Cardiac septum (tissue), 1 donor: ENCODE measurements at regions of chr11 and their contacts with region 1.

Region 1: GRCh38 chr11:57800444-57801182 is 39.0 kb downstream of the CTNND1 start:
- DNase-seq: no peak

Region 2: GRCh38 chr11:57761301-57762234 is 39.0 kb before region 1 on chr11 and contains the start of gene CTNND1:
- intact Hi-C with region 1: loop called (anchors 2 kb)
- DNase-seq: peak; percentile 90
- total RNA-seq, gene CTNND1: 73.8 TPM